ENCODE measurements at regions of chr17 and their contacts with region 1.

Region 1: DNA sequence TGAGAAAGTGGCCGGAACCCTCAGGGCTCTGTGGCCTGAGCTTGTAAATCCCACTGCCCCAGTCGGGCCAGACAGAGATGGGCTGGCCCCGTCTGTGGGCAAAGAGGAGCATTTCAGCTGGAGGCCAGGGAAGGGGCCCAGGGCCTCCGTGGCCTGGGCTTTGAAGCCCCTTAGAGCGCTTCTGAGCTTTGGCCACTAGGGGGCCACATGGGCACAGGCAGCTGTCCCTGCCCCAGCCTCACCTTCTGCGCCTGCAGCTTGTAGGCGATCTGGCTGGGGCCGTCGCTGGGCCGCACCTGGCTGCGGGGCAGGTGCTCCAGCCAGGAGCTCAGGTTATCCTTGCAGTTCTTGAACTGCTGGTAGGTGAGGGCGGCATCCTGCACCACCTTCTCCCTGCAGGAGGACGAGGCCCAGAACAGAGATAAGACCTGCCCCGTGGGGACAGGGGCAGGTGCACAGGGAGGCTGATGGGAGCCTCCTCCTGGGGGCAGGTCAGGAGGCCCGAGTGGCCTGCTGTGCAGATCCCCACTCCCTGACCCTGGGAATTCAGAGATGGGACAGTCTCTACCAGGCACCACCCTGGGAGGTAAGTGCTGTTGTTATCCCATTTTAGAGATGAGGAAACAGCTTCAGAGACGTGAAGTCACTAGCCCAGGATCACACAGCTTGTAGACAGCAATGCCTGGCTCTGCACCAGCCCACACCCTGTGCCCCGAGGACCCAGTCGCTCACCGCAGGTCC is 12.8 kb downstream of the EVPL start:
- DNase-seq: peak; percentile 59
- H3K4me3 ChIP-seq: no peak overlapping the region
- H3K27ac ChIP-seq: no peak overlapping the region
- H3K4me1 ChIP-seq: no peaks in the 10 kb centered on the region
- H3K27me3 ChIP-seq: no peaks in the 10 kb centered on the region
- CTCF ChIP-seq: peak; percentile 89 to 99
- POLR2A ChIP-seq: no peak

Region 2: GRCh38 chr17:75877752-75878173 is 136.6 kb before region 1 on chr17:
- CTCF ChIA-PET with region 1: no interaction called
- POLR2A ChIA-PET with region 1: no interaction called
- dilution Hi-C with region 1: no loop called
- intact Hi-C with region 1: no loop called
- DNase-seq: peak; percentile 74
- H3K4me3 ChIP-seq: peak overlapping the region; percentile 1 to 67 (median 66)
- H3K27ac ChIP-seq: peak overlapping the region; percentile 70
- H3K4me1 ChIP-seq: peaks cover 34% of the 10 kb centered on the region
- H3K27me3 ChIP-seq: no peaks in the 10 kb centered on the region
- CTCF ChIP-seq: peak; percentile 33 to 66
- POLR2A ChIP-seq: no peak

Region 3: DNA sequence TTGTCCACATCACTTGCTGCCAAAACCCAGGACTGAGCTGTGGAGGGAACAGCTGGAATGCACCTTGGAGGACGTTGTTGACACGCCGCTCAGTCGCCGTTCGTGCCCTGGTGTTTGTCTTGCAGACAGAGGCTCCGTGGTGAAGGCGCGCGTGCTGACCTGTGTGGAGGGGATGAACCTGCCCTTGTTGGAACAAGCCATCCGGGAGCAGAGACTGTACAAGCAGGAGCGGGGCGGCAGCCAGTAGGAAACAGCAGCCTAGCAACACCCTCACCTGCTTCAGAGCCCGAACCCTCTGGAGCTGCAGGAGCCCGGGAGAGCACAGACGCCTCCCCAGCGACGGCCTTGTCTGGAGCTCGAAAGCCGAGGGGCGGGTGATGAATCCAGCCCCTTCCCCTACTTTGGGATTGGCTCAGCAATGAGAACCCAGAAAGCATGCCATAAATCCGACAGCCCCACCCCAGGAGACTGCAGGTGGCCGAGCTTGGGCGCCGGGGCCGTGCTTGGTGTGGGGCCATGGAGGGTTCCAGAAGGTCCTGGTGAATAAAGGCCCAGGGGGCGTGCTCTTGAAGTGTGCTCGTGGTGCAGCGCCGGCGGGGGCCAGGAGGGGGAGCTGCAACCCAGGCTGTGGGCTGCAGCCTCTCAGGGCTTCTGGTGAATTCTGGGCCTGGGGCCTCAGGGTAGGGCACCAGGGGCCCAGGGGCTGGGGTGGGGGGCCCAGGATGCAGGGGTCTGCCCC is 14.2 kb before region 1 on chr17:
- CTCF ChIA-PET with region 1: interaction called, 35 read pairs
- POLR2A ChIA-PET with region 1: no interaction called
- dilution Hi-C with region 1: no loop called
- intact Hi-C with region 1: no loop called
- DNase-seq: peak; percentile 40
- H3K4me3 ChIP-seq: no peak overlapping the region
- H3K27ac ChIP-seq: no peak overlapping the region
- H3K4me1 ChIP-seq: peaks cover 3% of the 10 kb centered on the region
- H3K27me3 ChIP-seq: no peaks in the 10 kb centered on the region
- CTCF ChIP-seq: peak; percentile 80 to 89
- POLR2A ChIP-seq: no peak

Region 4: DNA sequence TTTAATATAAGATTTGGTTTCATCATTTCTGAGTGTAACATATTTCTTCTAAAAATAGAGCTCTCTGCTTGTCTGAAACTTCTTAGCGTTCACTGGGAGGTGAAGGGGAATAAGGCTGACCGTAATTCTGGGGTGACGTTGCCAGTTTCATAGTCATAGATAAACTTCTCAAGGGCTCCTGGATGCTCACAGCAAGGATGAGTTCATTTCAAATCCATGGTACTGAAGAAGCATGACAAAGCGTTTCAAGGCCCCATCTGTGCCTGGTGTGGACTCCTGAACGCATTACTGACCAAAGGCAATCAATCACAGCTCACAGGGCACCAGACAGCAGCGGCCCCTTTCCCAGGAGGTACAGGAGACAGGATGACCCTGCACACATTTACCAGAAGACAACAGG is 24.8 kb after region 1 on chr17:
- CTCF ChIA-PET with region 1: interaction called, 28 read pairs
- POLR2A ChIA-PET with region 1: no interaction called
- dilution Hi-C with region 1: no loop called
- intact Hi-C with region 1: no loop called
- DNase-seq: no peak
- H3K4me3 ChIP-seq: no peak overlapping the region
- H3K27ac ChIP-seq: no peak overlapping the region
- H3K4me1 ChIP-seq: no peaks in the 10 kb centered on the region
- H3K27me3 ChIP-seq: no peaks in the 10 kb centered on the region
- CTCF ChIP-seq: no peak
- POLR2A ChIP-seq: no peak

Region 5: DNA sequence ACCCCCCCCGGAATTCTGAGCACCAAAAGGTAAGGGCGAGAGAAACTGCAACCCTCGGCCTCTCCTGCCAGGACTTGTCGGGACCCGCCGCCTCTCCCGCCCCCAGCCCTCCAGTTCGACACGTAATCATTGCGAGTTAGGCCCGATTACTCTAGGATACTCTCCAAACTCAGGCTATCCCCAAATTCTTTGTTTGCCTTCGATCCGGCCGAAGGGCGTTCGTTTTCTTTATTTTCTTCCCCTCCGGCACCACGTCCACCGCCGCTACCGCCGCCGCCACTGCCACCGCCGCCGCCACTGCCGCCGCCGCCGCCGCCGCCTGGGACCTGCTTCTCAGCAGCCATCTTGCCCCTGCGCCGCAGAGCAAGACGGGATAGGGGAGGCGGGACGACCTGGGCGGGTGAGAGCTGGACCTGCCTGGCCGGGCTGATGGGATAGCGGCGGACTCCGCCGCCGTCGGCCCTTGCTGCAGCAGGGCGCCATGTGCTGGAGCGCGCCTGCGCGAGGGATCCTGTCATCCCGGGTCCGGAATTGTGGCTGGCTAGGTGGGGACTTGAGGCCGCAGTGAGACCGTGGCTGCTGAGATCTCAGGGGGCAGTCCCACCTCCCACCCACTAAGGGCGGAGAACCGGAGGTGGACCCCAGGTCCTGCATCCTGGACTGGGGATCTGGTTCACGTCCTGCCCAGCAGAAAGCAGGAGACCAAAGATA is 57.9 kb after region 1 on chr17 and contains the start of gene SRP68:
- CTCF ChIA-PET with region 1: interaction called, 10 read pairs
- POLR2A ChIA-PET with region 1: no interaction called
- dilution Hi-C with region 1: no loop called
- intact Hi-C with region 1: loop called (anchors 5 kb)
- DNase-seq: peak; percentile 94
- H3K4me3 ChIP-seq: peak within 1 kb of the TSS; percentile 59 to 95 (median 73)
- H3K27ac ChIP-seq: peak within 1 kb of the TSS; percentile 67
- H3K4me1 ChIP-seq: peaks cover 16% of the 10 kb centered on the region
- H3K27me3 ChIP-seq: peaks cover 34 to 40% of the 10 kb centered on the region in 2 experiments
- CTCF ChIP-seq: no peak
- POLR2A ChIP-seq: peak; percentile 96
- total RNA-seq, gene SRP68: 77.6 and 81.7 TPM in 2 replicates

Region 6: GRCh38 chr17:76182016-76182764 is 167.8 kb after region 1 on chr17:
- CTCF ChIA-PET with region 1: interaction called, 21 read pairs
- POLR2A ChIA-PET with region 1: no interaction called
- dilution Hi-C with region 1: no loop called
- intact Hi-C with region 1: loop called (anchors 10 kb)
- DNase-seq: peak; percentile 93
- H3K4me3 ChIP-seq: no peak overlapping the region
- H3K27ac ChIP-seq: no peak overlapping the region
- H3K4me1 ChIP-seq: peaks cover 8% of the 10 kb centered on the region
- H3K27me3 ChIP-seq: no peaks in the 10 kb centered on the region
- CTCF ChIP-seq: peak; percentile 86 to 88
- POLR2A ChIP-seq: no peak

Measured in endothelial cell of umbilical vein (primary cell).